Heart left ventricle (tissue), 16 donors: ENCODE measurements at regions of chr9 and their contacts with region 1.

Region 1: GRCh38 chr9:71768388-71769174 is at the start of gene CEMIP2:
- DNase-seq: peak; percentile 91 to 96 (median 93)
- ATAC-seq: peak; percentile 82 to 95 (median 93)
- H3K4me3 ChIP-seq: peak within 1 kb of the TSS; percentile 53 to 96 (median 84)
- H3K27ac ChIP-seq: peak within 1 kb of the TSS; percentile 87 to 100 (median 98)
- H3K4me1 ChIP-seq: peaks cover 0 to 51% (median 23%) of the 10 kb centered on the region in 12 donors
- H3K27me3 ChIP-seq: no peaks in the 10 kb centered on the region
- CTCF ChIP-seq: peak in 11 of 12 donors; percentile 14 to 60 (median 42)
- POLR2A ChIP-seq: peak; percentile 73 to 95
- total RNA-seq, gene CEMIP2: 6.7 to 49.3 (median 7.4) TPM

Region 2: GRCh38 chr9:71285191-71285656 is 483.4 kb before region 1 on chr9:
- intact Hi-C with region 1: loop called in 3 of 10 experiments (anchors 5 to 10 kb)
- DNase-seq: peak in 2 of 5 donors; percentile 17 to 31
- ATAC-seq: peak; percentile 65 to 76 (median 72)
- H3K4me3 ChIP-seq: no peak overlapping the region
- H3K27ac ChIP-seq: no peak overlapping the region
- H3K4me1 ChIP-seq: peaks cover 0 to 5% (median 0%) of the 10 kb centered on the region in 12 donors
- H3K27me3 ChIP-seq: no peaks in the 10 kb centered on the region
- CTCF ChIP-seq: peak; percentile 72 to 91 (median 84)
- POLR2A ChIP-seq: no peak

Region 3: DNA sequence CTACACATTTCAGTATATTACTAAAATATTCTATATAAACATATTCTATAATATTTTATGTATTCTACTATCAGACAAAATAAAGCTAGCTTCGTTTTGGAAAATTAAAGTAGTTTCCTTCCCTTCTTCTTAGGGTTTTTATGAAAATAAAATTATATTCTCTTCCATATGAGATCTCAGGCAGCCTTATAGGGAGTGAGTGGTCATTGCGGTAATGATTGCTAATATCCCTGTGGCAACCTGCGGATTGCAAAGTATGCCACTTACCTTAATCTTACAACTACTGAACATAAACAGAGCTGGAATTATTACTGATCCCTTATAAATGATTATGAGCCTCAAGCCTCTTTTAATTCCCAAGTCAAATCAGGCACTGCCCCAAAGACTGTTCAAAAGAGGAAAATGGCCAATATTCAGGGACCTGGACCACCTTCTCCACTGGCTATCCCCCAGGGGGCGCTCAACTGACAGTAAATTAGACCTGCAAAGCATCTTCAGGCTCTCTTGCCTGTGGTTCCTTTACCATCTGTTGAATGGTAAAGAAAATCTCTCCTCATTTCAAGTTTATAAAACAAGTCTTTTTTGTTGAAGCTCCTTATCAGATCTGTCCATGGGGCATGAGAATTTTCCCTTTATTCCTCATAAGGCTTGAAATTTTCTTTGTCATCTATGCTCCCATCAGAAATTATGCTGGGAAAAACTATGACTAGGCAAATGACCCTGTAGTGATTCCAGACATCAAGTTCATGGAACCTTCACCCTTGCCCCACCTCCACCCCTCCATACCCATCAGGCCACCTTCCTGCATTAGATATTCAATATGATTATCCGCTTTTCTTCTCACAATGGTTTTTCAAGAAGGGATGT is 164.2 kb before region 1 on chr9:
- intact Hi-C with region 1: loop called in 9 of 10 experiments (anchors 1 to 5 kb)
- DNase-seq: peak; percentile 76 to 81 (median 78)
- ATAC-seq: peak in 3 of 4 donors; percentile 68 to 86 (median 78)
- H3K4me3 ChIP-seq: no peak overlapping the region
- H3K27ac ChIP-seq: no peak overlapping the region
- H3K4me1 ChIP-seq: peaks cover 0 to 3% (median 0%) of the 10 kb centered on the region in 12 donors
- H3K27me3 ChIP-seq: no peaks in the 10 kb centered on the region
- CTCF ChIP-seq: peak; percentile 64 to 83 (median 76)
- POLR2A ChIP-seq: no peak

Region 4: GRCh38 chr9:71614409-71615010 is 154.1 kb before region 1 on chr9:
- intact Hi-C with region 1: loop called in 3 of 10 experiments (anchors 5 kb)
- DNase-seq: no peak
- ATAC-seq: no peak
- H3K4me3 ChIP-seq: no peak overlapping the region
- H3K27ac ChIP-seq: no peak overlapping the region
- H3K4me1 ChIP-seq: no peaks in the 10 kb centered on the region
- H3K27me3 ChIP-seq: no peaks in the 10 kb centered on the region
- CTCF ChIP-seq: no peak
- POLR2A ChIP-seq: no peak

Region 5: GRCh38 chr9:71716138-71716909 is 52.3 kb before region 1 on chr9:
- intact Hi-C with region 1: loop called in 2 of 10 experiments (anchors 5 kb)
- DNase-seq: no peak
- ATAC-seq: no peak
- H3K4me3 ChIP-seq: no peak overlapping the region
- H3K27ac ChIP-seq: no peak overlapping the region
- H3K4me1 ChIP-seq: peaks cover 0 to 10% (median 0%) of the 10 kb centered on the region in 12 donors
- H3K27me3 ChIP-seq: no peaks in the 10 kb centered on the region
- CTCF ChIP-seq: peak; percentile 35 to 60 (median 44)
- POLR2A ChIP-seq: no peak

Region 6: GRCh38 chr9:71725590-71726338 is 42.8 kb before region 1 on chr9:
- intact Hi-C with region 1: loop called in 2 of 10 experiments (anchors 2 to 5 kb)
- DNase-seq: no peak
- ATAC-seq: no peak
- H3K4me3 ChIP-seq: no peak overlapping the region
- H3K27ac ChIP-seq: no peak overlapping the region
- H3K4me1 ChIP-seq: no peaks in the 10 kb centered on the region
- H3K27me3 ChIP-seq: no peaks in the 10 kb centered on the region
- CTCF ChIP-seq: no peak
- POLR2A ChIP-seq: no peak

Region 7: DNA sequence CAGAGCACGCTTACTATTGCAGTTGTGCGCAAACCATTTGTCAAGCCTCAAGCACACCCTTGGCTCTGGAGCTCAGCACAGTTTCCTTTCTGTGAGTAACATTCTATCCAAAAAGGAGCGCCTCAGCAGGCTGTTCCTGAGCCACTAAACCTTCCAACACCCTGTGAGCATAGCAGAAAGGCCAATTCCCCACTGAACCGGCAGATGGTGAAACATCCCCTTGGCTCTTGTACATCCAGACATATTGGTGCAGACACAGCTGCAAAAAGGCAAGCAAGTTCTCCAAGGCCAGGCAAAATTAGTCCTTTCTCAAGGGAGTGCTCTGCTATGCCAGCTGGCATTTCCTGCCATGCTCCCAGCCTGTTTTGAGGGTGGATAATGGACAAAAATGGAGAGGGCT is 43.8 kb after region 1 on chr9:
- intact Hi-C with region 1: loop called in 1 of 10 experiments (anchors 5 kb)
- DNase-seq: peak in 4 of 5 donors; percentile 23 to 67 (median 42)
- ATAC-seq: peak; percentile 65 to 93 (median 82)
- H3K4me3 ChIP-seq: no peak overlapping the region
- H3K27ac ChIP-seq: peak overlapping the region in 4 of 12 donors; percentile 11 to 37 (median 24)
- H3K4me1 ChIP-seq: peaks cover 0 to 14% (median 6%) of the 10 kb centered on the region in 12 donors
- H3K27me3 ChIP-seq: no peaks in the 10 kb centered on the region
- CTCF ChIP-seq: peak in 3 of 12 donors; percentile 23 to 32 (median 24)
- POLR2A ChIP-seq: no peak